ENCODE measurements at regions of chr12 and their contacts with region 1.

Region 1: GRCh38 chr12:117836999-117837736 is 131.6 kb downstream of the KSR2 start:
- DNase-seq: peak; percentile 67
- H3K4me3 ChIP-seq: peak overlapping the region in 1 of 2 experiments; percentile 28; a peak in 1 of 4 replicates
- H3K27ac ChIP-seq: no peak overlapping the region; a peak in 1 of 4 replicates
- H3K4me1 ChIP-seq: peaks cover 0 to 29% of the 10 kb centered on the region in 2 experiments; a peak in 1 of 4 replicates
- H3K27me3 ChIP-seq: no peaks in the 10 kb centered on the region; the same call in 1 of the 2 replicates
- CTCF ChIP-seq: peak; percentile 99
- EP300 ChIP-seq: no peak
- RAD21 ChIP-seq: peak; percentile 99

Region 2: DNA sequence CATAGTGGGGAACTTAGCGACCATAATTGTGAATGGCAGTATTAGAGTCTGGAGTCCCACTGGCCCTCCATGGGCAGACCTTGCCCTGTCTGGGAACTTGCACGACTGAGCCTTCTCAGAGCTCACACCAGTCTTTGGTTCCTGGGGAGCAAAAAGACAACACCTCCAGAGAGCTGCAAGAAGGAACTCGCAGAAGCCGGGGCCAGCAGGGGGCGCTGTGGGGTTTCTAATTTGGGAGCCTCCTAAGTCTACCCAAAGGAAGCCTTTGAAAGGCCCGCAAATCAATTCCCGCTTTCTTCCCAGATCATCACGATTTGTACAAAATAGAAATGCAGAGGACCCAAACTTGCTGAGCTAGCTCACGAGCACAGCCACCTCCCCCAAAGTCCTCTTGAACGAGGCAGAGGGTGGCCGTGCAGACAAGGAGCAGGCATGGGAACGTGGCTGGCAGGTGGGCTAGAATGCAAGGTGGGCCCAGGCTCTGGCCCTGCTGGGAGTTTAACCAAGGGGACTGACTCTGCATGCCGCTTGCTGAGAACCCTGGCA is 600.6 kb before region 1 on chr12:
- CTCF ChIA-PET with region 1: interaction called, 102 read pairs
- POLR2A ChIA-PET with region 1: no interaction called
- DNase-seq: peak; percentile 70
- H3K4me3 ChIP-seq: no peak overlapping the region; a peak in 1 of 4 replicates
- H3K27ac ChIP-seq: no peak overlapping the region
- H3K4me1 ChIP-seq: no peaks in the 10 kb centered on the region
- H3K27me3 ChIP-seq: no peaks in the 10 kb centered on the region; the same call in 1 of the 2 replicates
- CTCF ChIP-seq: peak; percentile 77
- EP300 ChIP-seq: no peak
- RAD21 ChIP-seq: peak; percentile 80

Region 3: GRCh38 chr12:117388951-117389446 is 448.2 kb before region 1 on chr12:
- CTCF ChIA-PET with region 1: interaction called, 12 read pairs
- POLR2A ChIA-PET with region 1: interaction called, 3 read pairs
- DNase-seq: peak; percentile 68
- H3K4me3 ChIP-seq: no peak overlapping the region
- H3K27ac ChIP-seq: peak overlapping the region in 1 of 2 experiments; percentile 93; a peak in 2 of 4 replicates
- H3K4me1 ChIP-seq: peaks cover 0 to 57% of the 10 kb centered on the region in 2 experiments; a peak in 1 of 4 replicates
- H3K27me3 ChIP-seq: no peaks in the 10 kb centered on the region
- CTCF ChIP-seq: no peak
- EP300 ChIP-seq: peak in 1 of 2 experiments; percentile 98; a peak in 2 of 4 replicates
- RAD21 ChIP-seq: no peak

Region 4: GRCh38 chr12:117580718-117581062 is 256.5 kb before region 1 on chr12:
- CTCF ChIA-PET with region 1: interaction called, 23 read pairs
- POLR2A ChIA-PET with region 1: no interaction called
- DNase-seq: peak; percentile 70
- H3K4me3 ChIP-seq: no peak overlapping the region
- H3K27ac ChIP-seq: peak overlapping the region in 1 of 2 experiments; percentile 67; a peak in 1 of 4 replicates
- H3K4me1 ChIP-seq: peaks cover 0 to 33% of the 10 kb centered on the region in 2 experiments; a peak in 1 of 4 replicates
- H3K27me3 ChIP-seq: no peaks in the 10 kb centered on the region
- CTCF ChIP-seq: no peak
- EP300 ChIP-seq: no peak
- RAD21 ChIP-seq: no peak

Region 5: DNA sequence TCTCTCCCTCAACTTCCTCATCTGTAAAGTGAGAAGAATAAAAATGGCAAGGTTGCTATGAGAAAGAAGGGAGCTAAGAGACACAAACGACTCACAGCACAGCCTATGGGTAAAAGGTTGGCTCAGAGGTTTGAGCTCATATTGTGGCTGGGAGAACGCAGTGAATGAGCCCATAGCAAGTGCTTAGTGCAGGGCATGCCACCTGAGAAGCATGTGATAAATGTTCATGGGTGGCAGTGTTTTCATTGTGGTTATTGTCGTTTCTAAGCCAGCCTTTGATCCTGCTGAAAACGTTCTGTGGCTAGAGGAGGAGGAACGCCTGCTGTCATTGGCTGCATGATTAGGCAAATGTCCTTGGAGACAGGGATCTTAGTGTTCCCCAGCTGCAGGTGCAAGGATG is 18.8 kb before region 1 on chr12:
- CTCF ChIA-PET with region 1: interaction called, 12 read pairs
- POLR2A ChIA-PET with region 1: interaction called, 3 read pairs
- DNase-seq: no peak
- H3K4me3 ChIP-seq: no peak overlapping the region
- H3K27ac ChIP-seq: no peak overlapping the region
- H3K4me1 ChIP-seq: peaks cover 0 to 7% of the 10 kb centered on the region in 2 experiments; a peak in 1 of 4 replicates
- H3K27me3 ChIP-seq: no peaks in the 10 kb centered on the region
- CTCF ChIP-seq: no peak
- EP300 ChIP-seq: no peak
- RAD21 ChIP-seq: no peak

Region 6: GRCh38 chr12:117857632-117858612 is 20.8 kb after region 1 on chr12:
- CTCF ChIA-PET with region 1: interaction called, 24 read pairs
- POLR2A ChIA-PET with region 1: no interaction called
- DNase-seq: peak; percentile 71
- H3K4me3 ChIP-seq: no peak overlapping the region; a peak in 1 of 4 replicates
- H3K27ac ChIP-seq: no peak overlapping the region
- H3K4me1 ChIP-seq: no peaks in the 10 kb centered on the region
- H3K27me3 ChIP-seq: no peaks in the 10 kb centered on the region
- CTCF ChIP-seq: peak; percentile 59
- EP300 ChIP-seq: no peak
- RAD21 ChIP-seq: no peak; the same call in 1 of the 2 replicates